Posterior vena cava (tissue), 2 donors: ENCODE measurements at regions of chr10 and their contacts with region 1.

Region 1: DNA sequence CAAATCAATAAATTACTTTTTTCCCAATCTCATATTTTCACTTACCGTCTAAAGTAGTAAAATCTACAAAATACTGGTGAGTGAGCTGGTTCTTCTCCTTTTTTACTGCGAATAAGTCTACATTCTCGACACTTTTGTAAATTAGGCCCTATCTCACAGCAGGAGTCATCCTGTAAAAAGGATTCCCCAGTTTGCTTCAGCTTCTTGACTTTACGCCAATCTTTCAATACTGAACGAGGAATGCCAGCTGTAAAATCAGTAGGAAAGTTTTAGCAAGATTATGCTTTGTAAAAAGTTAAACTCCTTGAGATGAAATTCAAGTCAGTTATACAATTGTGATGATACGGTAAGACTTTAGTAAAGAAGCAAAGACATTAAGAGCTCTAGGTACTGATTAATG is 67.3 kb downstream of the NRBF2 start:
- DNase-seq: no peak

Region 2: GRCh38 chr10:63115732-63116383 is 84.6 kb before region 1 on chr10:
- intact Hi-C with region 1: no loop called
- DNase-seq: peak; percentile 92

Region 3: DNA sequence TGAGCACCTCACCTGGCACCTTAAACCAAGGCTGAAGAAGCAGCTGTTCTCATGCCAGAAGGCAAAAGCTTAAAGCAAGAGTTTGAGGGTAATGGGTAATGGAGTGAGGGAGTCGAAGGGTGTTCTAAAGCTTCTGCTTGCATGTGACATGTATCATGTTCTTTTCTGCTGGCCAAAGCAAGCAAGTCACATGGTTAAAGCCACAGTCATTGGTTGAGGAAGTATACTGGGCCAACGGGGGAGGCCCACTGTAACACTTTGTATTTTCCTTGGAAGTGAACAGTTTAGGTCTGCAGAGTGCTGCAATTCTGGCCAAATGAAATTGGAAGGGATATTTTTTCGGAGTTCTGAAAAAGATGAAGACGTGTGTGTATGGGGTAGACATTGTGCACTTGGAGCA is 396.5 kb after region 1 on chr10:
- intact Hi-C with region 1: loop called in 1 of 2 experiments (anchors 2 kb)
- DNase-seq: no peak